ENCODE measurements at regions of chr5 and their contacts with region 1.

Region 1: GRCh38 chr5:96807075-96807654 is 580 bp downstream of the ERAP1 start:
- DNase-seq: peak in 2 of 9 experiments; percentile 9 to 32
- ATAC-seq: no peak
- H3K4me3 ChIP-seq: peak overlapping the region; percentile 71 to 85
- H3K4me3 Mint-ChIP-seq: peak overlapping the region; percentile 95
- H3K27ac ChIP-seq: peak overlapping the region; percentile 93 to 96
- H3K27ac Mint-ChIP-seq: peak overlapping the region; percentile 98
- H3K4me1 ChIP-seq: peaks cover 70% of the 10 kb centered on the region
- H3K4me1 Mint-ChIP-seq: peaks cover 82% of the 10 kb centered on the region
- H3K27me3 ChIP-seq: no peaks in the 10 kb centered on the region
- H3K27me3 Mint-ChIP-seq: no peaks in the 10 kb centered on the region
- CTCF ChIP-seq: no peak

Region 2: GRCh38 chr5:96315431-96315830 is 491.7 kb before region 1 on chr5:
- CTCF ChIA-PET with region 1: no interaction called
- POLR2A ChIA-PET with region 1: no interaction called
- intact Hi-C with region 1: no loop called
- DNase-seq: no peak
- ATAC-seq: no peak
- H3K4me3 ChIP-seq: no peak overlapping the region
- H3K4me3 Mint-ChIP-seq: no peak overlapping the region
- H3K27ac ChIP-seq: no peak overlapping the region
- H3K27ac Mint-ChIP-seq: no peak overlapping the region
- H3K4me1 ChIP-seq: no peaks in the 10 kb centered on the region
- H3K4me1 Mint-ChIP-seq: no peaks in the 10 kb centered on the region
- H3K27me3 ChIP-seq: no peaks in the 10 kb centered on the region
- H3K27me3 Mint-ChIP-seq: peaks cover 25% of the 10 kb centered on the region
- CTCF ChIP-seq: no peak

Region 3: DNA sequence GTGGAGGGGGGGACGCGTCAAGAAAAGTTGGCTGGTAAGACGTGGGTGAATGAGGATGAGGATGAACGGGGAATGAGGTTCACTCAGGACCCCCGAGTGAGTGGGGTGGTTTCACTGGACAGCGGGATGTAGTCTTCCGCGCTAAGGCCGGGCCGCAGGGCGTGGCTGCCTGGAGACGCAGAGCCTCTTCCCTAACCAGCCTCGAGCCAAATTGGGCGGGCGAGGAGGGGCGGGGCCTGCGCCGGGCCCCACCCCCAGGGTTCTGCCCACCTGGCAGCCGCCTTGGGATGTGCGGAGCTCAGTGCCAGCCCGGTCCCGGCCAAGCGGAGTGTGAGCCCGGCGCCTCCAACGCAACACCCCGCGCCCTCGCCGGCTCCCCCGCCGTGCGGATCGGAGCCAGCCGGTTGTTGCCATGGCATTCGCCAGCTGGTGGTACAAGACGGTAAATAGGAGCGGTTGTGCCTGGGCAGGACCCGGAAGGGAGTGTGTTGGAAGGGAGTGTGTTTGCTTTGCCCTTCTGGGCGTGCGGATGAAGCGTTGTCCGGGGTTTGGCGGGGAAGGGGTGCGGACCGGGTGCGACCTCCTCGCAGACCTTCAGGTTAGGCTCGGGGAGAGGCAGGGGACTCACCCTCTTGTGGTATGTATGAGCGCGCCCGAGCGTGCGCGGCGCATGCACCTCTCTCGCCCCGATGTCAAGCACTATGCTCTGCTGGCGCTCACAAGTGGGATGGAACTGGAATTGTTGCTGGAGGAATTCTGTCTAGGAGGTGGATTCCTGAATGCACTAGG is 144.2 kb before region 1 on chr5:
- CTCF ChIA-PET with region 1: no interaction called
- POLR2A ChIA-PET with region 1: interaction called, 9 read pairs
- intact Hi-C with region 1: loop called (anchors 2 to 5 kb)
- DNase-seq: peak; percentile 71 to 89 (median 83)
- ATAC-seq: peak; percentile 68
- H3K4me3 ChIP-seq: peak overlapping the region; percentile 54 to 86
- H3K4me3 Mint-ChIP-seq: peak overlapping the region; percentile 94
- H3K27ac ChIP-seq: peak overlapping the region; percentile 72 to 81
- H3K27ac Mint-ChIP-seq: peak overlapping the region; percentile 98
- H3K4me1 ChIP-seq: peaks cover 23% of the 10 kb centered on the region
- H3K4me1 Mint-ChIP-seq: peaks cover 51% of the 10 kb centered on the region
- H3K27me3 ChIP-seq: no peaks in the 10 kb centered on the region
- H3K27me3 Mint-ChIP-seq: no peaks in the 10 kb centered on the region
- CTCF ChIP-seq: no peak

Region 4: DNA sequence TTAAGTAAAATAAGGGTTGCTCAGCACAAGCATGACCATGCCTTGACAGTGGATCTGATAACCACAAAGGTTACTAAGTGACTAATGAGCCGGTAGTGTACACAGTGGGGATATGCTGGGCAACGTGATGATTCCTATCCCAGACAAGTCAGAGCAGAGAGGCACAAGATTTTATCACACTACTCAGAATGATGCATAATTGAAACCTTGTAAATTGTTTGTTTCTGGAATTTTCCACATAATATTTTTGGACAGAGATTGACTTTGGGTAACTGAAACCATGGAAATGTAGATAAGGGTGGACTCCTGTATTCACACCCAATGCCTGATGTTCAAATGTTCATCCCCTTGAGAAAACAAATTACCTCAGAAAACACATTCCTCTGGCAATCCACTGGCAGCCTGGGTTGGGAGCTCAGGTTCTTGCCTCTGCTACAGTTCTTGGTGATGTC is 16.8 kb after region 1 on chr5:
- CTCF ChIA-PET with region 1: interaction called, 50 read pairs
- POLR2A ChIA-PET with region 1: interaction called, 96 read pairs
- intact Hi-C with region 1: loop called in 1 of 2 experiments (anchors 2 kb)
- DNase-seq: no peak
- ATAC-seq: peak; percentile 56
- H3K4me3 ChIP-seq: no peak overlapping the region
- H3K4me3 Mint-ChIP-seq: no peak overlapping the region
- H3K27ac ChIP-seq: no peak overlapping the region
- H3K27ac Mint-ChIP-seq: no peak overlapping the region
- H3K4me1 ChIP-seq: peaks cover 24% of the 10 kb centered on the region
- H3K4me1 Mint-ChIP-seq: peaks cover 45% of the 10 kb centered on the region
- H3K27me3 ChIP-seq: no peaks in the 10 kb centered on the region
- H3K27me3 Mint-ChIP-seq: no peaks in the 10 kb centered on the region
- CTCF ChIP-seq: no peak

Region 5: GRCh38 chr5:96963267-96963666 is 156.1 kb after region 1 on chr5:
- CTCF ChIA-PET with region 1: no interaction called
- POLR2A ChIA-PET with region 1: interaction called, 10 read pairs
- intact Hi-C with region 1: no loop called
- DNase-seq: peak in 4 of 9 experiments; percentile 22 to 58 (median 26)
- ATAC-seq: peak; percentile 39
- H3K4me3 ChIP-seq: no peak overlapping the region
- H3K4me3 Mint-ChIP-seq: peak overlapping the region; percentile 68
- H3K27ac ChIP-seq: peak overlapping the region; percentile 30 to 44
- H3K27ac Mint-ChIP-seq: peak overlapping the region; percentile 94
- H3K4me1 ChIP-seq: peaks cover 68% of the 10 kb centered on the region
- H3K4me1 Mint-ChIP-seq: peaks cover 80% of the 10 kb centered on the region
- H3K27me3 ChIP-seq: no peaks in the 10 kb centered on the region
- H3K27me3 Mint-ChIP-seq: no peaks in the 10 kb centered on the region
- CTCF ChIP-seq: no peak